Posterior cingulate gyrus (tissue), 11 donors: ENCODE measurements at regions of chr6 and their contacts with region 1.

Region 1: DNA sequence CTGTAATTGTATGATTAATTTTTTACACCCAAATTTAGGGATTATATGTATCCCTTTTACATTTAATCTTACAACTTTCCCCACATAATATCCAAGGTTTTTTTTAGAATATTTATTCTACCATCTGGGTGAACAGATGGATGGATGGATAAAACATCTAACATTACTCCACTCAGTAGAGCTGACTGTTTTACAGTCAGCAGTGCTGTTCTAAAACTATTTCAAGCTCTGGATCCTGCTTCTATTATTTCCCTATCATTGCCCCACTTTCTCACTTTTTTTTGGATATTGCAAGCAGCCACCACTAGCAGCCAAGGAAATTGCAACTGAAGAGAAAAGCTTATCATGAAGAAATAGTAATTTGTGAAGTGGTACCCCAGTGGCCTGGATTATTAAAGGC is 173.7 kb downstream of the ARHGAP18 start:
- DNase-seq: no peak

Region 2: DNA sequence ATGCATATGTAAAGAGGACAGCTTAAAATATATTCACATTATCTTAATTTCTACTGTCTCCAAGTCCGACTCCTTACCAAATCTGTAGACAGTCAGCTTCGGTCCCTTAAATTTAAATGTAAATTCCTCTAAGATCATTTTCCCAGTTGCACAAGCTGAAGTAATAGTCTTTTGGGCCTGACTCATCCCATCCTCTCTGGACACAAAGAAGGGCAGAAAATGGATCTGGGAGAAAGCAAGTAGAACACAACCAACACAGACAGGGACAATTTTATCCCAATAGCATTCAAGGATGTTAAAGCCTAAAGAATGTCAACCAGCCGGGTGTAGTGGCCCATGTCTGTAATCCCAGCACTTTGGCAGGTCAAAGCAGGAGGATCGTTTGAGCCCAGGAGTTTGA is 54.6 kb before region 1 on chr6:
- intact Hi-C with region 1: loop called (anchors 2 kb)
- DNase-seq: no peak